T-cell (primary cell): ENCODE measurements at regions of chr1 and their contacts with region 1.

Region 1: GRCh38 chr1:211323156-211324063 is 3.2 kb upstream of the TRAF5 start:
- DNase-seq: peak; percentile 29 to 85 (median 58)
- ATAC-seq: peak; percentile 60 to 73 (median 64)
- H3K4me3 ChIP-seq: no peak overlapping the region
- H3K4me3 Mint-ChIP-seq: no peak overlapping the region
- H3K27ac ChIP-seq: no peak overlapping the region
- H3K27ac Mint-ChIP-seq: no peak overlapping the region
- H3K4me1 ChIP-seq: peaks cover 9 to 34% of the 10 kb centered on the region in 2 experiments
- H3K4me1 Mint-ChIP-seq: peaks cover 30 to 42% (median 35%) of the 10 kb centered on the region in 3 donors
- H3K27me3 ChIP-seq: no peaks in the 10 kb centered on the region
- H3K27me3 Mint-ChIP-seq: no peaks in the 10 kb centered on the region

Region 2: DNA sequence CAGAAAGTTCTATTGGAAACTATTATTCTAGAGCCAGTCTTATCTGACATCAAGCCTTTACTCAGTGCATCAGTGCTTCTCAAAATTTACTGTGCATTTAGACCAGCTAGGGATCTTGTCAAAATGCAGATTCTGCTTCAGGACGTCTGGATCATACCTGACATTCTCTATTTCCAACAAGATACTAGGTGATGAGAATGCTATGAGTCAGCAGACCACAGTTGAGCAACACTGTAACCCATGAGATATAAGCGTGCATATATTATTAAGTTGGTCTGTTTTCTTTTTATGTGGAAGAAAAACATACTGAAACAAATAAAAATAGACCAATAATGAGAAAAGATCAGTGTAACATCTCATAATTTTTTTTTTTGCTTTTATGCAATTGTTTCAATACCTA is 149.0 kb before region 1 on chr1:
- CTCF ChIA-PET with region 1: no interaction called
- POLR2A ChIA-PET with region 1: no interaction called
- DNase-seq: no peak
- ATAC-seq: no peak
- H3K4me3 ChIP-seq: no peak overlapping the region
- H3K4me3 Mint-ChIP-seq: no peak overlapping the region
- H3K27ac ChIP-seq: no peak overlapping the region
- H3K27ac Mint-ChIP-seq: no peak overlapping the region
- H3K4me1 ChIP-seq: no peaks in the 10 kb centered on the region
- H3K4me1 Mint-ChIP-seq: no peaks in the 10 kb centered on the region
- H3K27me3 ChIP-seq: peaks cover 0 to 3% of the 10 kb centered on the region in 2 experiments
- H3K27me3 Mint-ChIP-seq: peaks cover 6 to 21% of the 10 kb centered on the region in 2 donors

Region 3: GRCh38 chr1:211349741-211350140 is 26.3 kb after region 1 on chr1:
- CTCF ChIA-PET with region 1: interaction called, 4 to 10 read pairs
- POLR2A ChIA-PET with region 1: no interaction called
- DNase-seq: no peak
- ATAC-seq: no peak
- H3K4me3 ChIP-seq: no peak overlapping the region
- H3K4me3 Mint-ChIP-seq: no peak overlapping the region
- H3K27ac ChIP-seq: no peak overlapping the region
- H3K27ac Mint-ChIP-seq: peak overlapping the region; percentile 34 to 38
- H3K4me1 ChIP-seq: peaks cover 19 to 72% of the 10 kb centered on the region in 2 experiments
- H3K4me1 Mint-ChIP-seq: peaks cover 86 to 93% (median 88%) of the 10 kb centered on the region in 3 donors
- H3K27me3 ChIP-seq: no peaks in the 10 kb centered on the region
- H3K27me3 Mint-ChIP-seq: no peaks in the 10 kb centered on the region

Region 4: DNA sequence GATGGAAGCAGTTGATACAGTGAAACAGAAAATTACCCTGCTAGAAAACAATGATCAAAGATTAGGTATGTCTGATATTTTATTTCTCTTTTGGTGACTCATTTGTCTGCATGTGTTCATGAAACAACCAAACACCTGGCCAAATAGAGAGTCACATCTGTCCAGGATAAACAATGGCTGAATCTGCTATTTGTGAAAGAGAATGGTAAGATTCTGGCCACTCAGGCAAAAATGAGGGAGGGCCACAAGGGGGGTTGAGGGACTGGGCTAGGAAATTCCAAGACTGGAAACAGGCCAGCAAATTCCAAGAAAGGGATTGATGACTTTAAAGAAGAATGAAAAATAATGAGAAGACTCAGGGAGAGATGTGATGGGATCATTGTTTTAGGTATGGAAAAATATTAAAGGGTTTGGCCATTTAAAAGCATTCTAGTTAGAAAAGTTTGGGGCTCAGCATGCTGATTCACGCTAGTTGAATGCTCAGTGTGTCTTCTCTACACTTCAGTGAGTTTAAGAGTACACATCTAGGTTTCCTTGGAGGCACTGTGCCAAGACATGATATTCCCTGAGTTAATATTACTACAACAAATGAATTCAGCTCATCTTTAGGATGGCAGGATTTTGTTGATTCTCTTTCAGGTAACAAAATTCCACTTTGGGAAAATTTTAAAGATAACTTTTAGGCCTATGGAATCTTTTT is 48.1 kb after region 1 on chr1:
- CTCF ChIA-PET with region 1: interaction called in 1 of 2 experiments, 11 read pairs
- POLR2A ChIA-PET with region 1: no interaction called
- DNase-seq: no peak
- ATAC-seq: no peak
- H3K4me3 ChIP-seq: no peak overlapping the region
- H3K4me3 Mint-ChIP-seq: no peak overlapping the region
- H3K27ac ChIP-seq: no peak overlapping the region
- H3K27ac Mint-ChIP-seq: peak overlapping the region; percentile 2 to 68
- H3K4me1 ChIP-seq: no peaks in the 10 kb centered on the region
- H3K4me1 Mint-ChIP-seq: peaks cover 2 to 17% (median 7%) of the 10 kb centered on the region in 3 donors
- H3K27me3 ChIP-seq: no peaks in the 10 kb centered on the region
- H3K27me3 Mint-ChIP-seq: no peaks in the 10 kb centered on the region

Region 5: GRCh38 chr1:211476200-211476849 is 152.9 kb after region 1 on chr1:
- CTCF ChIA-PET with region 1: interaction called, 14 to 34 read pairs
- POLR2A ChIA-PET with region 1: interaction called in 1 of 2 experiments, 4 read pairs
- DNase-seq: peak; percentile 47 to 85 (median 72)
- ATAC-seq: peak; percentile 67 to 81 (median 76)
- H3K4me3 ChIP-seq: no peak overlapping the region
- H3K4me3 Mint-ChIP-seq: no peak overlapping the region
- H3K27ac ChIP-seq: no peak overlapping the region
- H3K27ac Mint-ChIP-seq: no peak overlapping the region
- H3K4me1 ChIP-seq: peaks cover 0 to 5% of the 10 kb centered on the region in 2 experiments
- H3K4me1 Mint-ChIP-seq: peaks cover 0 to 6% (median 1%) of the 10 kb centered on the region in 3 donors
- H3K27me3 ChIP-seq: peaks cover 0 to 31% of the 10 kb centered on the region in 2 experiments
- H3K27me3 Mint-ChIP-seq: peaks cover 23 to 36% of the 10 kb centered on the region in 2 donors